ENCODE measurements at regions of chr4 and their contacts with region 1.

Region 1: GRCh38 chr4:88591787-88592599 is at the start of gene HERC3:
- DNase-seq: peak; percentile 93
- ATAC-seq: peak; percentile 99
- total RNA-seq, gene HERC3: 41.9 to 45.9 TPM

Region 2: DNA sequence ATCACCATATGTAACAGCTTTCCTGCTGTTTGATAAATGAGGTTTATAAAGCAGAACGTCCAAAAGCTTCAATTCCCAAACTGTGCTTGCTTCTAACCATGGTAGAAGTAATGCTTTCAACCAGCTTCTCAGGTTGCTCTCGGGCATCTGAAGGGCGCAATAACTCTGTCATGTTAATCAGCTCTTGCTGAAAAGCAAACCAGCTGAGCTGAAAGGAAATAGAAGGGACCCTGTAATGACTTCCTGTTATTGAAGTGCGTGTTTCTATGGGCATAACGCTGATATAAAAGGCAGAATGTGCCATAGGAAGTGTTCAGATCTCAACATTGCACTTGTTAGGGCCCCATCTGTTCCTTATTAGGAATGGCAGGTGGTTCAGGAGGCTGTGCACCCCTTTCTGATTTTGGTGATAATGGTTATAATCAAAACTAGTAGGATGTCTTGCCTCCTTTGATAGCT is 21.5 kb after region 1 on chr4:
- intact Hi-C with region 1: loop called in 1 of 2 experiments (anchors 2 kb)
- DNase-seq: no peak
- ATAC-seq: peak in 1 of 2 donors; percentile 32

Measured in left cardiac atrium (tissue), 4 donors.